ENCODE measurements at regions of chr17 and their contacts with region 1.

Region 1: DNA sequence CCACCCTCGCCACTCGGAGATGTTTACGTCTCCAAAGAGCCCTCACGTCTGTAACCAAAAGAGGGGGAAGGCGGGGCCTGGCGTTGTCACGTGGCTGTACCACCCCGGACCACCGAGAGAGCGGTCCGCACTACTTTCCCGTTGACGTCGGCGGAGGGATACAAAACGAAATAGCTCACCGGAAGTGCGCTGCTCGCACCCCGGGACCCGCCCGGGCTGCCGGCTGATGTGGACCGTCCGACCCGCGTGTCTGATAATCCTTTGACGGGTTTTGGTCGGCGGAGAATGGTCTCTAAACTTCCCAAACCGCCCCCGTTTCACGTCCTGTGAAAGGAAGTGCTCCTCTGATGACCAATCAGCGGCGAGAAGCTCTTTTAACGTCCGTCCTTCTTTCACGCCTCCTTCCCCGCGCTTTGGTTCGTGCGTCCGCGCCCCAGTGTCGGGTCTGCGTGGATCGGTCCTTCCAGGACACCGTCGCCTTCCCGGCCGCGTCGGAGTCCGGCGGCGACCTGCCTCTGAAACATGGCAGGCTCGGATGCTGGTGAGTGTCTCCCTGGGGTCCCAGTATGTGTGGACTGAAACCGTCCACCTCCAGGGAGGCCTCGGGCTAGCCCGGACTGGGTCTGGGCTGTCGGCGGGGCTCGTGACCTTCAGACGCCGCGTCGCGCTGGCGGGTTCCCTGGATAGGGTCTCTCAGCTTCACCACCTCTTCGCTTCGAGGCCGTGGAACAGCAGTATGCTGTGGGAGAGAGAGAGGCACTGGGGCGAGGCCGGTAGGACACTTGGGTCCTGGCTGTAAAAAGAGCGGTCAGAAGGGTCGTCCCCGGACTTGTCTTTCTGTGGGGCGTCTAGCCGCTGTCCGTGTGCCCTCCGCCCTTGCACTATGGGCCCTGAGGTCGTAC is at the start of gene CEP95:
- DNase-seq: peak; percentile 99
- H3K4me3 ChIP-seq: peak within 1 kb of the TSS; percentile 78 to 90 (median 80)
- H3K27ac ChIP-seq: peak within 1 kb of the TSS; percentile 95 to 100 (median 98)
- H3K4me1 ChIP-seq: peaks cover 0 to 53% (median 48%) of the 10 kb centered on the region in 4 donors
- H3K27me3 ChIP-seq: no peaks in the 10 kb centered on the region
- CTCF ChIP-seq: no peak
- EP300 ChIP-seq: peak in 2 of 4 donors; percentile 13 to 34
- POLR2A ChIP-seq: peak; percentile 88 to 89
- total RNA-seq, gene CEP95: 34.9 to 74.5 (median 56.9) TPM

Region 2: GRCh38 chr17:64554028-64554637 is 47.3 kb after region 1 on chr17:
- intact Hi-C with region 1: no loop called
- DNase-seq: no peak
- H3K4me3 ChIP-seq: no peak overlapping the region
- H3K27ac ChIP-seq: no peak overlapping the region
- H3K4me1 ChIP-seq: no peaks in the 10 kb centered on the region
- H3K27me3 ChIP-seq: no peaks in the 10 kb centered on the region
- CTCF ChIP-seq: no peak
- EP300 ChIP-seq: no peak
- POLR2A ChIP-seq: no peak

Region 3: GRCh38 chr17:64599187-64599676 is 92.4 kb after region 1 on chr17:
- intact Hi-C with region 1: no loop called
- DNase-seq: no peak
- H3K4me3 ChIP-seq: no peak overlapping the region
- H3K27ac ChIP-seq: no peak overlapping the region
- H3K4me1 ChIP-seq: no peaks in the 10 kb centered on the region
- H3K27me3 ChIP-seq: no peaks in the 10 kb centered on the region
- CTCF ChIP-seq: no peak
- EP300 ChIP-seq: no peak
- POLR2A ChIP-seq: no peak

Region 4: GRCh38 chr17:64661976-64662773 is 155.3 kb after region 1 on chr17 and contains the start of gene SMURF2:
- intact Hi-C with region 1: loop called (anchors 5 kb)
- DNase-seq: peak; percentile 88
- H3K4me3 ChIP-seq: peak within 1 kb of the TSS; percentile 81 to 92 (median 86)
- H3K27ac ChIP-seq: peak within 1 kb of the TSS; percentile 85 to 95 (median 90)
- H3K4me1 ChIP-seq: peaks cover 0 to 42% (median 30%) of the 10 kb centered on the region in 4 donors
- H3K27me3 ChIP-seq: no peaks in the 10 kb centered on the region
- CTCF ChIP-seq: peak in 1 of 4 experiments; percentile 14
- EP300 ChIP-seq: no peak
- POLR2A ChIP-seq: peak in 1 of 2 donors; percentile 28
- total RNA-seq, gene SMURF2: 23.8 to 30.2 (median 25.9) TPM

Measured in sigmoid colon (tissue), 7 donors.